ENCODE measurements at regions of chr6 and their contacts with region 1.

Region 1: DNA sequence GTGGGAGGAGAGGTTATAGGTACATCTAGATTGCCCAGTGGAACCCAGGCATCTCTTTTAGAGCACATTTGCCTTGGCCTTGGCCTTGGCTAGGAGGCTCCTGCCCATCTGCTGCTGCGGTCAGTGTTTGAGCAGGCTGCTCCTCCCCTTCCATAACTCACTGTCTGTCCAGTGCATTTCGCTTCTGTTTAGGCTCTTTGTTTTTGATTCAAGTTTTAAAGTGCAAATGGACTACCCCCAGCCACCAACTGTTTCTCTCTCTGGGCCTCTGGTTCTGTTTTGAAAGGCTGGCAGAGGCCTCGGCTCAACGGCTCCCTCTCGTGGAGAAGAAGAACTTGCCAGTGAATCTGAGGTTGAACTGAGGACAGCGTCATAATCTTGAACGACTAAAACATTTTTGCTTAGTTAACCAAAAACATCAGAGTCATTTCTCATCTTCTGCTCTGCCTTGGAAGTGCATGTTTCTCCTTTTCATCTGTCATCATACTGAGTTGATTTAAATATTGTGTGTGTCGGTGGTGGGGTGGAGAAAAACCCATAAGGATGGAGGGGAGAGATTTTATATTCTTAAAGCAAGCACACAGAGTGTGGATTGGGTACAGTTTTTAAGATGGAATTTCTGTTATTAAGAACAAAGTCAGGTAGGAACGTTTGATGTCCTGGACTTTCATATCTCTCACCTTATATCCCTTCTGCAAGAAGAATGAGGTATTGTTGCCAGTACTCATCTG is 171.4 kb downstream of the DTNBP1 start:
- H3K4me3 Mint-ChIP-seq: no peak overlapping the region
- H3K27ac Mint-ChIP-seq: peak overlapping the region; percentile 66
- H3K4me1 Mint-ChIP-seq: peaks cover 70% of the 10 kb centered on the region
- H3K27me3 Mint-ChIP-seq: no peaks in the 10 kb centered on the region

Region 2: DNA sequence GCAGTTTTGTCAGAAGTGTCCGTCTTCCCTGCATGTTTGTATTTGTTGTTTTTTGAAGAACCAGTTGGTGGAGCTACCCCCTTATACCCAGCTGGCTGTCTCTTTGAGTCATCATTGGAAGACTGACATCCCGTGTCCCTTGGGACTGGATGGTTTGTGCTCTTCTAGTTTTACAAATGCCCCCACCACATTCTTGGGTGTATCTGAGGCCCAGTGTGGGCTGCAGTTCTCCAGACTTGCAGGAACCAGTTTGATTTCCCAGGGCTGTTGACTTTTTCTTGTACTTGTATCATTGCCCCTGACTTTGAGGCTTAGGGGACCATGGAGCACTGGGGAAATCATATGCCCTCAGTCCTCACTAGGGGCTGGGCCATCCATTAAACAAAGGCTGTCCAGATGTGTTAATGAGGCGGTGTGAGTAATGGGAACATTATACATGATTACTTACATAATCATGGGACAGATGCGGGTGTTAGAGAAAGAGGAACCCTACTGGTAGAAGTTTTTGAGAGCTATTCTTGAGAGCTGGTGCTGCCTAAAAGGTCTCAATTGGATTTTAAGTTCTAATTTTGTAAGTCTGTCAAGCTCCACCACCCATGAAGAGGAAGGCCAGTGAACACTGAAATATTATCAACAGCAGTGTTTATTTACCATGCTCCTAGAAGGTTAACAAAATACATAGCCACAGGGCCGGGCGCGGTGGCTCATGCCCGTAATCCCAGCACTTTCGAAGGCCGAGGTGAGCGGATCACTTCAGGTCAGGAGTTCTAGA is 237.2 kb before region 1 on chr6:
- intact Hi-C with region 1: loop called (anchors 5 kb)
- H3K4me3 Mint-ChIP-seq: no peak overlapping the region
- H3K27ac Mint-ChIP-seq: no peak overlapping the region
- H3K4me1 Mint-ChIP-seq: peaks cover 96% of the 10 kb centered on the region
- H3K27me3 Mint-ChIP-seq: no peaks in the 10 kb centered on the region

Region 3: GRCh38 chr6:15473741-15474161 is 17.7 kb before region 1 on chr6:
- intact Hi-C with region 1: loop called (anchors 2 kb)
- H3K4me3 Mint-ChIP-seq: no peak overlapping the region
- H3K27ac Mint-ChIP-seq: no peak overlapping the region
- H3K4me1 Mint-ChIP-seq: peaks cover 42% of the 10 kb centered on the region
- H3K27me3 Mint-ChIP-seq: no peaks in the 10 kb centered on the region

Region 4: GRCh38 chr6:15621203-15622044 is 130.0 kb after region 1 on chr6:
- intact Hi-C with region 1: loop called (anchors 5 kb)
- H3K4me3 Mint-ChIP-seq: no peak overlapping the region
- H3K27ac Mint-ChIP-seq: peak overlapping the region; percentile 93
- H3K4me1 Mint-ChIP-seq: peaks cover 24% of the 10 kb centered on the region
- H3K27me3 Mint-ChIP-seq: no peaks in the 10 kb centered on the region